ENCODE measurements at regions of chr18 and their contacts with region 1.

Region 1: DNA sequence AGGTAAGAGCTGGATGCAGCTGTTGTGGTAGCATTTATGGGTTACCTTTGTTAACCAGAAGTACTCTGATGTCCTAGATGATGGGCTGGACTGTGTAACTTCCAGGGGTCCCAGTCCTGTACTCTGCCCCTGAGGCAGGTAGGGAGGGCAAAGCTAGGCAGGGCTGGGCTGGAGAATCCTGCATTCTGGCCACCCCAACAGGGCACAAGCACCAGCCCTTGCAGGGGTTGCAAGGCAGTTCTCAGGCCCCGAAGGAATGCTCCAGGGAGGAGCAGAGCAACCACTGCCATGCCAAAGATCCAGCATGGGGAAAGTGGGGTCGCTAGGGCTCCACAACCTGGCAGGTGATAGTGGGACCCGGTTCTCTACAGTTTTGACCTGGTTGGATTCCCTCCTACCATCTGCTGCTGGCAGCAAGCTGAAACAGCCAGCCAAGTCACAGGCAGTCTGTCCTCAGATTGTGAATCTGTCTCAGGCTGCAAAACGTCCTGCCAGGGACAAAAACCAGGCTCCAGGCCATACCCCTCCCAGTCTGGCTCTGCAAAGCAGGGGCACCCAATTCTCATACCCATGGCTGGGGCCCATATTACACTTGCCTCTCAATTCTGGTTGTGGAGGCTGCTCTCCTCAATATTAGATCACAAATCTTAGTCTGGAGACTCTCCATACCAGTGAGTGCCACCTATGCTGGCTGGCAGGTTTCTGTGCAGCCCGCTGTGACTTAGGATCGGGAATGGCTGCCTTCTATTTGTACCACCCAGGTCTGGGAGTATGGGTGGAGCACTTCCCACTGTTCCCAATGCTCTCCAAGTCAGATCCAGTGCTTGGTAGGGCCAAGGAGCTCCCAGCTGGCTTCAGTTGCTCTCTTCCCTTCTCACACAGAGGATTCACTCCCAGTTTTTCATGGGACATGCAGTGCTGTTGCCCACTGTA is 61.1 kb downstream of the SMCHD1 start:
- DNase-seq: no peak
- ATAC-seq: no peak
- H3K4me3 ChIP-seq: no peak overlapping the region
- H3K4me3 Mint-ChIP-seq: no peak overlapping the region
- H3K27ac ChIP-seq: no peak overlapping the region
- H3K27ac Mint-ChIP-seq: peak overlapping the region; percentile 61
- H3K4me1 ChIP-seq: no peaks in the 10 kb centered on the region
- H3K4me1 Mint-ChIP-seq: peaks cover 20% of the 10 kb centered on the region
- H3K27me3 ChIP-seq: no peaks in the 10 kb centered on the region
- H3K27me3 Mint-ChIP-seq: no peaks in the 10 kb centered on the region
- CTCF ChIP-seq: no peak

Region 2: GRCh38 chr18:2680216-2680792 is 36.4 kb before region 1 on chr18:
- CTCF ChIA-PET with region 1: no interaction called
- POLR2A ChIA-PET with region 1: no interaction called
- intact Hi-C with region 1: loop called (anchors 5 kb)
- DNase-seq: no peak
- ATAC-seq: no peak
- H3K4me3 ChIP-seq: no peak overlapping the region
- H3K4me3 Mint-ChIP-seq: no peak overlapping the region
- H3K27ac ChIP-seq: peak overlapping the region in 1 of 2 donors; percentile 17
- H3K27ac Mint-ChIP-seq: peak overlapping the region; percentile 48
- H3K4me1 ChIP-seq: no peaks in the 10 kb centered on the region
- H3K4me1 Mint-ChIP-seq: peaks cover 29% of the 10 kb centered on the region
- H3K27me3 ChIP-seq: no peaks in the 10 kb centered on the region
- H3K27me3 Mint-ChIP-seq: no peaks in the 10 kb centered on the region
- CTCF ChIP-seq: no peak

Region 3: DNA sequence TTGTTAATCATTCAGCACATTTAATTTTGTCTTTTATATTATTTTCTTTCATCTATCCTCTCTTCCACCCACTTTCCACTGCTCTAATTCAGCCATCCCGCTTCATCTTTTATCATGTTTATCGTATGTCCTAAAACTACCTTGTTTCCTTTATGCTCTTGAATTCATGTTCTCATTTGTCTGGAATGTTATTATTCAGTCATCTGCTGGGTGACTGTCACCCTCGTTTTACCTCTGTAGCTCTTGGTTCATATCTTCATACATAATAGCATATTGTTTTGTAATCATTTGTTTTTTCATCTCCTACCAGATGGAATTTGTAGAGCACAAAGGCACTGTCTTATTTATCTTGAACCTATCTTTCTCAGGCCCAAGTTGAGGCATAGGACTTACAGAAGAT is 24.2 kb before region 1 on chr18:
- CTCF ChIA-PET with region 1: no interaction called
- POLR2A ChIA-PET with region 1: no interaction called
- intact Hi-C with region 1: loop called (anchors 2 kb)
- DNase-seq: no peak
- ATAC-seq: no peak
- H3K4me3 ChIP-seq: no peak overlapping the region
- H3K4me3 Mint-ChIP-seq: no peak overlapping the region
- H3K27ac ChIP-seq: no peak overlapping the region
- H3K27ac Mint-ChIP-seq: peak overlapping the region; percentile 0
- H3K4me1 ChIP-seq: peaks cover 13 to 14% of the 10 kb centered on the region in 2 donors
- H3K4me1 Mint-ChIP-seq: peaks cover 19% of the 10 kb centered on the region
- H3K27me3 ChIP-seq: no peaks in the 10 kb centered on the region
- H3K27me3 Mint-ChIP-seq: no peaks in the 10 kb centered on the region
- CTCF ChIP-seq: no peak

Region 4: DNA sequence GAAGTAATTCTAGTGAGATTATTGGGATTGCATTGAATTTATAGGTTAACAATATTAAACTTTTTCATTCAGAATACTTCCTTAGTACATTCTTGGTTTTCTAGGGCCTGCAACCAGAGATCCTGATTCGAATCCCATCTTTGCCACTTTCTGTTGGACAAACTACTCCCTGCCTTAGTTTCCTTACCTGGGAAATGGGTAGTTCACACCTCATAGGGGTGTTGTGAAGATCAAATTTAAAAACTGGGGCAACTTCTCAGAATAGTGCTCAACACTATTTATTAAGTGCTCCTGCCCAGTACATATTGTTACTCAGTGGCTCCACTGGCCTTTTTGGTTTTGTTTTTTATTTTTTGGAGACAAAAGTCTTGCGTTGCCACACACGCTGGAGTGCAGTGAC is 17.7 kb before region 1 on chr18:
- CTCF ChIA-PET with region 1: no interaction called
- POLR2A ChIA-PET with region 1: no interaction called
- intact Hi-C with region 1: loop called (anchors 2 kb)
- DNase-seq: no peak
- ATAC-seq: no peak
- H3K4me3 ChIP-seq: no peak overlapping the region
- H3K4me3 Mint-ChIP-seq: no peak overlapping the region
- H3K27ac ChIP-seq: peak overlapping the region in 1 of 2 donors; percentile 15
- H3K27ac Mint-ChIP-seq: no peak overlapping the region
- H3K4me1 ChIP-seq: no peaks in the 10 kb centered on the region
- H3K4me1 Mint-ChIP-seq: peaks cover 1% of the 10 kb centered on the region
- H3K27me3 ChIP-seq: no peaks in the 10 kb centered on the region
- H3K27me3 Mint-ChIP-seq: no peaks in the 10 kb centered on the region
- CTCF ChIP-seq: no peak